Mammary epithelial cell (primary cell): ENCODE measurements at regions of chr1 and their contacts with region 1.

Region 1: DNA sequence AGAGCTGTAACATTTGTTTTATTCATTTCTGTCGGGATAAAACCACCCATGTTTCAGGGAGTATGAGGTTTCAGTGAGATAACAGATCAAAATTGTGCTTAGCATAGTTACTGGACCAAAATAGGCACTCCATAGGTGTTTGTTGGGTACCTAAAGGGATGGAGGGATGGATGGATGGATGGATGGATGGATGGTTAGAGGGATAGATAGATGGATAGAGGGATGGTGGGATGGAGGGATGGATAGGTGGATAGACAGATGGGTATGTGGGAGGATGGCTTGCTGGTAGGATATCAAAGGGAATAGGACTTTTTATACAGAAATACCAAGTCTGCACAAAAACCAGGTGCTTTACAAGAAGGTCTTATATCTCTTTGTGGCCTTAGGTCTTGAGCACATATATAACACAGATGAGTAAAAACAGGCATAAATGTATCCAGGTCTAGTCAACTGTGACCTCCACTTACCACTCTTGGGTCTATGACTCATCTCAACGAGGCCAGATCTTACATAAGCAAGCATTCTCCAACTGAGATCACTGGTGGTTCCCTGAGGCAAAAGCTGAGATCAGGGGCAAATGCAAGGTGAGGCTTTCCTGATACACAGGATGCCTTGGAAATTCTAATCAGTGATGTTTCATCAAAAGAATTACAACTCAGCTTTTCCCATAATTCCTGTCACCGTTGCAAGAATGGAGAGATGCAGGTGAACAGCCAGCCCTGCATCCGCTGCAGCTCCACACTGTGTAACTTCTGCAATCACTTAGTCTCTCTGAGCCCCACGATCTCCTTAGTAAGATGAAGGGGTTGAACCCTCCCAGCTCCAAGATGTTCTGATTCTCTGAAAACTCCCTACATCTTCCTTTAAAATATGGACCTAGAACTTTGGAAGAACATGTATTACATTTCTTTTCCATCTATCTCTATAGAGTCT is 32.0 kb downstream of the PTAFR start:
- DNase-seq: peak; percentile 94
- H3K4me3 ChIP-seq: no peak overlapping the region
- H3K27ac ChIP-seq: no peak overlapping the region
- H3K4me1 ChIP-seq: peaks cover 10% of the 10 kb centered on the region
- H3K27me3 ChIP-seq: no peaks in the 10 kb centered on the region
- CTCF ChIP-seq: no peak

Region 2: GRCh38 chr1:28104866-28105467 is 39.5 kb before region 1 on chr1:
- CTCF ChIA-PET with region 1: no interaction called
- dilution Hi-C with region 1: loop called (anchors 5 kb)
- in situ Hi-C with region 1: no loop called
- intact Hi-C with region 1: no loop called
- DNase-seq: peak; percentile 87
- H3K4me3 ChIP-seq: no peak overlapping the region
- H3K27ac ChIP-seq: no peak overlapping the region
- H3K4me1 ChIP-seq: no peaks in the 10 kb centered on the region
- H3K27me3 ChIP-seq: no peaks in the 10 kb centered on the region
- CTCF ChIP-seq: no peak